ENCODE measurements at regions of chr6 and their contacts with region 1.

Region 1: DNA sequence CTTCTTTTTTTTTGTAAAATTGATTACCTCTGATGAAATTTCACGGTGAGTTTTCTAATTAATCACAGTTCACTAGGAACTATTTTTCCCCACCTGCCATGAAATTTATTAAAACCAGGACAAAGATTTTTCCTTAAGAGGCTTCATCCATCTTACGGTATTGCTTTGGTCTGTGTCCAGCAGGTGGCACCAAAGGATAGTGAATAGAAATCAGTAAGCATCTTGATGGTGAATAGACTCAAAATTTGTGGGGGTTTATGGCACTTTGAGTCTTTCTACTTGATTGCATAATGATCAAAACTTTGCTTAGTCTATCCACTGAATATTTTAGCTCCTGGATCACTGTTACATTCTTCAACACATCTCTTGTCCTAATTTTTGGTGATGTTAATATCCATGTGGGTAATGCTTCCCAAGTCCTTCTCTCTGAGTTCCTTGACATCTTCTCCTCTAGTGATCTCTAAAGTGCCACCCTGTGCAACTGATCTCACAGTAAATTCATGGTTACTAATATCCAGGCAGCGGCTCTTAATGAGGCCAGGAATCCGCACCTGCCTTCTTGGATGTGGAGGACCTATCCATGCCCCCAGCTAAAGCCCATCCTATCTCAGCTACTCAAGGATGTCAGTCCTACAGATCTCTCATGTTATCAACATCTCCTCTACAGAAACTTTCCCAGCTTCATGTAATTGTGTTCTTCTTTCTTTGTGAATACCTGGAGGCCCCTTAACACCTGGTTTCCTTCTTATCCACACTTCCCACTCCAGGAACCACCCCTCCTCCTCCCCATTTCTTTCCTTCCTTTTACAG is 54.5 kb downstream of the STMND1 start:
- DNase-seq: peak; percentile 46 to 57 (median 49)
- H3K4me3 ChIP-seq: no peak overlapping the region
- H3K4me3 Mint-ChIP-seq: no peak overlapping the region
- H3K27ac ChIP-seq: no peak overlapping the region
- H3K27ac Mint-ChIP-seq: no peak overlapping the region
- H3K4me1 ChIP-seq: no peaks in the 10 kb centered on the region
- H3K4me1 Mint-ChIP-seq: no peaks in the 10 kb centered on the region
- H3K27me3 ChIP-seq: no peaks in the 10 kb centered on the region
- H3K27me3 Mint-ChIP-seq: peaks cover 13 to 20% of the 10 kb centered on the region in 2 donors

Region 2: GRCh38 chr6:17045581-17046326 is 110.6 kb before region 1 on chr6:
- CTCF ChIA-PET with region 1: no interaction called
- POLR2A ChIA-PET with region 1: no interaction called
- intact Hi-C with region 1: no loop called
- DNase-seq: no peak
- H3K4me3 ChIP-seq: no peak overlapping the region
- H3K4me3 Mint-ChIP-seq: no peak overlapping the region
- H3K27ac ChIP-seq: no peak overlapping the region
- H3K27ac Mint-ChIP-seq: no peak overlapping the region
- H3K4me1 ChIP-seq: no peaks in the 10 kb centered on the region
- H3K4me1 Mint-ChIP-seq: no peaks in the 10 kb centered on the region
- H3K27me3 ChIP-seq: peaks cover 4% of the 10 kb centered on the region
- H3K27me3 Mint-ChIP-seq: peaks cover 18 to 35% of the 10 kb centered on the region in 2 donors

Region 3: GRCh38 chr6:17808609-17809008 is 652.3 kb after region 1 on chr6:
- CTCF ChIA-PET with region 1: interaction called, 22 read pairs
- POLR2A ChIA-PET with region 1: no interaction called
- intact Hi-C with region 1: loop called (anchors 2 kb)
- DNase-seq: no peak
- H3K4me3 ChIP-seq: no peak overlapping the region
- H3K4me3 Mint-ChIP-seq: peak overlapping the region in 1 of 8 donors; percentile 11
- H3K27ac ChIP-seq: no peak overlapping the region
- H3K27ac Mint-ChIP-seq: no peak overlapping the region
- H3K4me1 ChIP-seq: no peaks in the 10 kb centered on the region
- H3K4me1 Mint-ChIP-seq: peaks cover 0 to 3% (median 0%) of the 10 kb centered on the region in 4 donors
- H3K27me3 ChIP-seq: no peaks in the 10 kb centered on the region
- H3K27me3 Mint-ChIP-seq: peaks cover 11 to 20% of the 10 kb centered on the region in 2 donors

Region 4: GRCh38 chr6:17820055-17820454 is 663.7 kb after region 1 on chr6:
- CTCF ChIA-PET with region 1: interaction called, 6 read pairs
- POLR2A ChIA-PET with region 1: no interaction called
- intact Hi-C with region 1: loop called (anchors 1 kb)
- DNase-seq: no peak
- H3K4me3 ChIP-seq: no peak overlapping the region
- H3K4me3 Mint-ChIP-seq: no peak overlapping the region
- H3K27ac ChIP-seq: no peak overlapping the region
- H3K27ac Mint-ChIP-seq: no peak overlapping the region
- H3K4me1 ChIP-seq: no peaks in the 10 kb centered on the region
- H3K4me1 Mint-ChIP-seq: no peaks in the 10 kb centered on the region
- H3K27me3 ChIP-seq: no peaks in the 10 kb centered on the region
- H3K27me3 Mint-ChIP-seq: peaks cover 4 to 6% of the 10 kb centered on the region in 2 donors